IMR-90 (cell line): ENCODE measurements at regions of chr17 and their contacts with region 1.

Region 1: GRCh38 chr17:81871387-81872230 is 472 bp upstream of the ARHGDIA start:
- DNase-seq: peak; percentile 83
- ATAC-seq: peak; percentile 4
- H3K4me3 ChIP-seq: peak overlapping the region; percentile 87
- H3K27ac ChIP-seq: peak overlapping the region; percentile 99
- H3K4me1 ChIP-seq: peaks cover 33% of the 10 kb centered on the region
- H3K27me3 ChIP-seq: no peaks in the 10 kb centered on the region
- CTCF ChIP-seq: peak; percentile 30; the same call in 1 of the 2 replicates
- POLR2A ChIP-seq: peak; percentile 4; the same call in 1 of the 2 replicates
- RAD21 ChIP-seq: no peak

Region 2: GRCh38 chr17:81716187-81716996 is 155.2 kb before region 1 on chr17:
- CTCF ChIA-PET with region 1: no interaction called
- POLR2A ChIA-PET with region 1: interaction called, 12 read pairs
- dilution Hi-C with region 1: no loop called
- in situ Hi-C with region 1: no loop called
- intact Hi-C with region 1: no loop called
- DNase-seq: no peak
- ATAC-seq: no peak
- H3K4me3 ChIP-seq: no peak overlapping the region
- H3K27ac ChIP-seq: no peak overlapping the region
- H3K4me1 ChIP-seq: peaks cover 7% of the 10 kb centered on the region
- H3K27me3 ChIP-seq: no peaks in the 10 kb centered on the region
- CTCF ChIP-seq: no peak
- POLR2A ChIP-seq: no peak
- RAD21 ChIP-seq: no peak